ENCODE measurements at regions of chr7 and their contacts with region 1.

Region 1: DNA sequence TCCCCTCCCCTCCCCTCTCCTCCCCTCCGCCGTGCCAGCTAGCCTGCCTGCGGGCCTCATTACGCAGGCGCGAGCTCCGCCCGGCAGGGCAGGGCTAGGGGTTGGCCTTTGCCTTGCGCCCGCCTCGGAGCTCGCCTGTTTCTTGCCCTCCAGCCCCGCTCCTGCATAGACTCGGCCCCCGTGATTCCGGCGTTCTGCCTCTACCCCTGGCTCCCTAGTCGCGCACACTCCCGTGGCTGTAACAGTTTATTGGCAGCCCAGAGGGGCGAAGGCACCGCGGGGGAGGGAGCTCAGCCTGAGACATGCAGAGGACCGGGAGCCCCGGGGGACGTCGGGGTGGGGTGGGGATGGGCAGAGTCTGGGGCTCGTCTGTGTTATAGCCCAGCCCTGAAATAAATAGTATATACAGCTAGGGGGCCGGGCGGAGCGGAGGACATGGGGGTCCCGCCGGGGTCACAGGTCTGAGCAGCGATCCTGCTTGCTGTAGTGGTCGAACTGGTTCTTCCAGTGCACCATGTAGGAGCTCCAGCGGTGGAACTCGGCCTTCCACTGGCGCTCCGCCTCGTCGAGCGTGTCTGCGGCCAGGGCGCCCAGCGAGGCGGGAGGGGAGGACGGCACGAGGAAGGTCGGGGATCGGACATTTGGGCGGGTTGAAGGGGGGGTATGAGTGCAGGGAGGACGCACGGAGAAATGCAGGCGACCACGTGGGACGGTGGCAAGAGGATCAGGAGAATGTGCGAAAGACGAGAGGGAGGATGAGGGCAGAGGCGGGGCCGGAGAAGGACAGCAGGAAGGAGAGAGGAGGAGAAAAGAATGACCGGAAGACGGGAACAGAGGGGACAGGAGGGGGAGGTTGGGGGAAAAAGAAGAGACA is 483 bp upstream of the UFSP1 start:
- DNase-seq: peak; percentile 90 to 93 (median 91)
- H3K4me3 ChIP-seq: peak overlapping the region; percentile 61 to 70
- H3K4me3 Mint-ChIP-seq: peak overlapping the region; percentile 84 to 95 (median 88)
- H3K27ac ChIP-seq: peak overlapping the region; percentile 39
- H3K27ac Mint-ChIP-seq: peak overlapping the region in 6 of 7 donors; percentile 22 to 93 (median 78)
- H3K4me1 ChIP-seq: peaks cover 50% of the 10 kb centered on the region
- H3K4me1 Mint-ChIP-seq: peaks cover 28 to 64% (median 40%) of the 10 kb centered on the region in 4 donors
- H3K27me3 ChIP-seq: peaks cover 2% of the 10 kb centered on the region
- H3K27me3 Mint-ChIP-seq: peaks cover 12 to 18% of the 10 kb centered on the region in 2 donors

Region 2: DNA sequence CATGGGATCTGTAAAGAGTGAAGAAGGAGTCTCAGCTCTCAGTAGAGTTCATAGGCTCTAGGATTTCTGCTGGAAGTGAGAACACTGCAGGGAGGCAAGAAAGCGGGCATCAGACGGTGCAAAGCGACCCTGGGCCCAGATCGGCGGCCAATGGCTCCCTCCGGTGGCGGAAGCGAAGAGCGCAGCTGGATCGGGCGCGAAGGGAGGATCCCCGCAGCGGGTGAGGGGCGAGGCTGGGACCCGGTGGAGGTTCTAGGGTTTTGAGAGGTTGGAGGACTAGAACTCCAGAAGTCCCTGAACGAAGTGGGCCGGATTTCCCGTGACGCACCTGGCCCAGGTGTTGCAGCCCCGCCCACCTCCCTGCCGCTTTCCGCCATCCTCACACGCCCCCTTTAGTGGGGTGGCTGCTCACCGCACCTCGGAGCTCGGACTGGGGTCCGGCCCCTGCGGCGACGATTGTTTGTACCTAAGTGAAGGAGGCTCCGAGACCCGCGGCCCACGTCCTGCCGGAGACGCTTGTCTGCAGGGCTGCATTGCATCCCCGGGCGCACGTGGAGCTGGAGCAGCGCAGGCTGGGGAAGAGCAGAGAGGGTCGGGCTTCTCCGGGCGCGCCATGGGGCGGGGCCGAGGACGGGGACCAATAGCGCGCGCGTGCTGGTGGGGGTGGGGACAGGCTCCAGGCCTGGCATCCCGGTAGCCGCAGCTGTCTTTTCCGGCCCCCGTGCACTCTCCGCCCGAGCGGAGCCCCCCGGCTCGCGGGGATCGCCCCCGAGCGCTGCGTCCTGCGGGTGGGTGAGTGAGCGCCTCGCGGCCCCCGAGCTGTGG is 37.7 kb before region 1 on chr7 and contains the start of gene SLC12A9:
- CTCF ChIA-PET with region 1: interaction called, 18 read pairs
- POLR2A ChIA-PET with region 1: interaction called, 35 read pairs
- intact Hi-C with region 1: loop called (anchors 1 kb)
- DNase-seq: peak; percentile 83 to 91 (median 88)
- H3K4me3 ChIP-seq: peak within 1 kb of the TSS; percentile 84 to 86
- H3K4me3 Mint-ChIP-seq: peak within 1 kb of the TSS; percentile 88 to 96 (median 92)
- H3K27ac ChIP-seq: peak within 1 kb of the TSS; percentile 51
- H3K27ac Mint-ChIP-seq: peak within 1 kb of the TSS; percentile 88 to 95 (median 93)
- H3K4me1 ChIP-seq: peaks cover 25% of the 10 kb centered on the region
- H3K4me1 Mint-ChIP-seq: peaks cover 11 to 36% (median 20%) of the 10 kb centered on the region in 4 donors
- H3K27me3 ChIP-seq: no peaks in the 10 kb centered on the region
- H3K27me3 Mint-ChIP-seq: no peaks in the 10 kb centered on the region
- total RNA-seq, gene SLC12A9: 63.7 to 64.6 TPM

Region 3: GRCh38 chr7:101058355-101058754 is 168.4 kb after region 1 on chr7:
- CTCF ChIA-PET with region 1: interaction called, 19 read pairs
- POLR2A ChIA-PET with region 1: interaction called, 3 read pairs
- intact Hi-C with region 1: no loop called
- DNase-seq: peak; percentile 23 to 51 (median 31)
- H3K4me3 ChIP-seq: no peak overlapping the region
- H3K4me3 Mint-ChIP-seq: peak overlapping the region in 1 of 8 donors; percentile 15
- H3K27ac ChIP-seq: no peak overlapping the region
- H3K27ac Mint-ChIP-seq: no peak overlapping the region
- H3K4me1 ChIP-seq: no peaks in the 10 kb centered on the region
- H3K4me1 Mint-ChIP-seq: peaks cover 0 to 3% (median under 1%) of the 10 kb centered on the region in 4 donors
- H3K27me3 ChIP-seq: peaks cover 10% of the 10 kb centered on the region
- H3K27me3 Mint-ChIP-seq: peaks cover 26 to 38% of the 10 kb centered on the region in 2 donors

Region 4: GRCh38 chr7:101085162-101085987 is 195.4 kb after region 1 on chr7 and contains the start of gene TRIM56:
- CTCF ChIA-PET with region 1: interaction called, 5 read pairs
- POLR2A ChIA-PET with region 1: interaction called, 13 read pairs
- intact Hi-C with region 1: no loop called
- DNase-seq: peak; percentile 71 to 86 (median 78)
- H3K4me3 ChIP-seq: peak within 1 kb of the TSS; percentile 85 to 87
- H3K4me3 Mint-ChIP-seq: peak within 1 kb of the TSS; percentile 96 to 99 (median 99)
- H3K27ac ChIP-seq: peak within 1 kb of the TSS; percentile 92
- H3K27ac Mint-ChIP-seq: peak within 1 kb of the TSS; percentile 95 to 100 (median 99)
- H3K4me1 ChIP-seq: peaks cover 42% of the 10 kb centered on the region
- H3K4me1 Mint-ChIP-seq: peaks cover 15 to 41% (median 29%) of the 10 kb centered on the region in 4 donors
- H3K27me3 ChIP-seq: no peaks in the 10 kb centered on the region
- H3K27me3 Mint-ChIP-seq: no peaks in the 10 kb centered on the region
- total RNA-seq, gene TRIM56: 79.4 to 81.1 TPM

Region 5: GRCh38 chr7:101244375-101245146 is 354.6 kb after region 1 on chr7 and contains the start of gene FIS1:
- CTCF ChIA-PET with region 1: interaction called, 4 read pairs
- POLR2A ChIA-PET with region 1: interaction called, 5 read pairs
- intact Hi-C with region 1: loop called (anchors 2 kb)
- DNase-seq: peak; percentile 91 to 96 (median 93)
- H3K4me3 ChIP-seq: peak within 1 kb of the TSS; percentile 95 to 100
- H3K4me3 Mint-ChIP-seq: peak within 1 kb of the TSS; percentile 93 to 99 (median 97)
- H3K27ac ChIP-seq: peak within 1 kb of the TSS; percentile 85
- H3K27ac Mint-ChIP-seq: peak within 1 kb of the TSS; percentile 93 to 99 (median 97)
- H3K4me1 ChIP-seq: peaks cover 24% of the 10 kb centered on the region
- H3K4me1 Mint-ChIP-seq: peaks cover 14 to 50% (median 24%) of the 10 kb centered on the region in 4 donors
- H3K27me3 ChIP-seq: no peaks in the 10 kb centered on the region
- H3K27me3 Mint-ChIP-seq: no peaks in the 10 kb centered on the region
- total RNA-seq, gene FIS1: 100 to 104 TPM

Measured in CD4-positive, alpha-beta memory T cell (primary cell).